T-cell (primary cell): ENCODE measurements at regions of chr6 and their contacts with region 1.

Region 1: DNA sequence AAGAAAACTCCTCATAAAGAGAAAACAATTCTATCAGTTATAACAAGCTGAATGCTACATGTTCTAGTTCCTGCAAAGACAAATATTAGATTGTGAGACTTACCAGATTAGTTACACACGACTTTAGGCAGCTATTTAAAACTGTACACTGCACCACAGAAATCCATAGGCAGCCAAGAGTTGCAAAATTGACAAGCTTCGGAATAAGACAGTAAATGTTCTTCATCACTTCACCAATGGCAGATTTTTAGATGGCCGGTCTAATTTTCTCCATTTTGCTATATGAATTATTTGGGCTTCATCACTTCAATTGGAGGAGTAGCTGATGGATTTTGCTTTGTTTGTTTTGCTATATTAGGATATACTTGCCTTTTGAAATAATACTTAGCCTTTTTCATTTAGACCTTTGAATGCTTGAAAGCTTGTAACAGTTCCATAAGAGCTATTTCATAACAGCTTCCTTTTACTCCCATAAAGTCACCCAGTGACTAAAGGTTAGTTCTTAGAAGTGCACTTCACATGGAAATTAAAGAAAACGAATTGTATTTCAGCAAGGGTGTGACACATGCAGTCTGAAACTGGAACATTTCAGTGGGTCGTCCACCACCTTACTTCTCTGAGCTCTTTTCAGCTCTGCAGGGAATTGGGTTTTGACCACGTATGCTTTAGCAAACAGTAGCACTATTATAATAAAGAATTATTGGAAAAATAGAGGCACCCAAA is at the start of gene ROS1:
- DNase-seq: no peak
- ATAC-seq: no peak
- H3K4me3 ChIP-seq: no peak within 1 kb of the TSS
- H3K4me3 Mint-ChIP-seq: no peak within 1 kb of the TSS
- H3K27ac ChIP-seq: no peak within 1 kb of the TSS
- H3K27ac Mint-ChIP-seq: no peak within 1 kb of the TSS
- H3K4me1 ChIP-seq: no peaks in the 10 kb centered on the region
- H3K4me1 Mint-ChIP-seq: no peaks in the 10 kb centered on the region
- H3K27me3 ChIP-seq: peaks cover 0 to 3% of the 10 kb centered on the region in 2 experiments
- H3K27me3 Mint-ChIP-seq: peaks cover 27 to 35% of the 10 kb centered on the region in 2 donors
- total RNA-seq, gene ROS1: 0.03 to 0.07 (median 0.06) TPM in 3 of 5 donors, not detected in the others

Region 2: GRCh38 chr6:116371120-116371917 is 1054.3 kb before region 1 on chr6:
- CTCF ChIA-PET with region 1: no interaction called
- POLR2A ChIA-PET with region 1: no interaction called
- DNase-seq: peak in 20 of 35 experiments; percentile 1 to 45 (median 14)
- ATAC-seq: peak; percentile 52 to 63 (median 54)
- H3K4me3 ChIP-seq: peak overlapping the region; percentile 66 to 81
- H3K4me3 Mint-ChIP-seq: peak overlapping the region; percentile 82 to 88 (median 86)
- H3K27ac ChIP-seq: no peak overlapping the region
- H3K27ac Mint-ChIP-seq: no peak overlapping the region
- H3K4me1 ChIP-seq: peaks cover 0 to 16% of the 10 kb centered on the region in 2 experiments
- H3K4me1 Mint-ChIP-seq: peaks cover 12 to 21% (median 17%) of the 10 kb centered on the region in 3 donors
- H3K27me3 ChIP-seq: peaks cover 0 to 11% of the 10 kb centered on the region in 2 experiments
- H3K27me3 Mint-ChIP-seq: peaks cover 14 to 32% of the 10 kb centered on the region in 2 donors

Region 3: GRCh38 chr6:117555882-117556498 is 130.4 kb after region 1 on chr6:
- CTCF ChIA-PET with region 1: no interaction called
- POLR2A ChIA-PET with region 1: interaction called in 1 of 2 experiments, 10 read pairs
- DNase-seq: peak in 28 of 35 experiments; percentile 8 to 76 (median 47)
- ATAC-seq: peak in 2 of 4 experiments; percentile 32
- H3K4me3 ChIP-seq: no peak overlapping the region
- H3K4me3 Mint-ChIP-seq: no peak overlapping the region
- H3K27ac ChIP-seq: no peak overlapping the region
- H3K27ac Mint-ChIP-seq: no peak overlapping the region
- H3K4me1 ChIP-seq: no peaks in the 10 kb centered on the region
- H3K4me1 Mint-ChIP-seq: peaks cover 2 to 5% (median 2%) of the 10 kb centered on the region in 3 donors
- H3K27me3 ChIP-seq: no peaks in the 10 kb centered on the region
- H3K27me3 Mint-ChIP-seq: no peaks in the 10 kb centered on the region